HEK293T (cell line): ENCODE measurements at regions of chr14 and their contacts with region 1.

Region 1: GRCh38 chr14:23327947-23328744 is 6.9 kb downstream of the PABPN1 start:
- DNase-seq: peak; percentile 69

Region 2: GRCh38 chr14:23120541-23121251 is 207.4 kb before region 1 on chr14:
- CTCF ChIA-PET with region 1: no interaction called
- POLR2A ChIA-PET with region 1: no interaction called
- DNase-seq: peak; percentile 94

Region 3: DNA sequence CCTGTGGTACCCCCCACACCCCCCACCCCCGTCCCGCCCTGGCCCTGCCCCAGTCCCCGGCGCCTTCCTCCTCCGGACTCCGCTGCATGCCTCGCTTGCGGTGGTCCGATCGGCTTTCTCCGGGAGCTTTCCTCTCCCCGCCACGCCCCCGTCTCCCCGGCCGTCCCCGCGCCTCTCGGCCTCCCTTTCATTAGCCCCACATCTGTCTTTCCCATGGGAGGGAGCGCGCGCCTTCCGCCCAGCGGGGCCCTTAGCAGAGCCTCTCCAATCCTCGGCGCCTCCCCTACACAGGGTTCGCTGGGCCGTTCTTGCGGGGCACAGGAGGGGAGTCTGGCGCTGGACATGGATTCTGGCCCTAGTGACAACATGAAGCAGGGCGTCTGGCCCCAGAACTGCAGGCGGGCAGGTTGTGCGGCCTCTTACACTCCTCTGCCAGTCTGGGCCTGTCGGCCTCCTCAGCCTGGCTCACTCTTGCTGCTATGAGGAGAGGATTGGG is 38.3 kb after region 1 on chr14:
- CTCF ChIA-PET with region 1: interaction called, 13 read pairs
- POLR2A ChIA-PET with region 1: no interaction called
- DNase-seq: no peak